ENCODE measurements at regions of chr16 and their contacts with region 1.

Region 1: GRCh38 chr16:19753815-19754643 is 36.0 kb downstream of the IQCK start:
- DNase-seq: no peak
- ATAC-seq: peak; percentile 19

Region 2: GRCh38 chr16:18816286-18816685 is 937.7 kb before region 1 on chr16:
- intact Hi-C with region 1: loop called (anchors 10 kb)
- DNase-seq: no peak
- ATAC-seq: no peak

Measured in sciatic nerve (tissue), 2 donors.